A673 (cell line): ENCODE measurements at regions of chr14 and their contacts with region 1.

Region 1: DNA sequence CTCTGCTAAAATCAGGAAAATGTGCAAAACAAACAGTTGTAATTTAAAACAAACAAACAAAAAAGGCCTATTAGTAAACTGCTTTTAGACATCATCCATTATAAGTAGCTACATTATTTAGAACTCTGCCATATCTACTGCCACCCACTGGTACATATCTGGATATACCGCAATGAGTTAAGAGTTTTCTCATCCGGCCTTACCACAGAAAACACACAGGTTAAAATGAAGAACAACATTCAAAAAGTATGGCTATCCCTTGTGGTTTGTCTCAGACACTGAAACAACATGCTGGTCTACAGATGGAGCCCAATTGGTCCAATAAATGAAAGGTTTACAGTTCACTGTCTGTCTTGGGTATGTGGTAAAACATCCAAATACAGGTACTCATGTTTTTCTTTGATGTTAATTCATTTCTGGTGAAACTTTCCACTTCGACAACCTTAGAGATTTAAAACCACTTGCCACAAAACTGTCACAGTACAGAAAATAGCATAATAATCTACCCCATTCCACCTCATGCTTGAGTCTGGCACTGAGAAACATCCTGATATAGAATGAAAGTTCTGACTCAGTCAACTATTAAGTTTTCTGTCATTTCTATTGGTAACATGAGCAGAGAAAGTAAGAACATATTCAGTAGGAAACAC is 354.3 kb downstream of the CEP128 start:
- DNase-seq: peak; percentile 36
- H3K4me3 ChIP-seq: no peak overlapping the region
- H3K27ac ChIP-seq: no peak overlapping the region
- H3K4me1 ChIP-seq: no peaks in the 10 kb centered on the region
- H3K27me3 ChIP-seq: no peaks in the 10 kb centered on the region
- CTCF ChIP-seq: peak; percentile 67

Region 2: GRCh38 chr14:80213599-80213998 is 373.6 kb before region 1 on chr14:
- CTCF ChIA-PET with region 1: no interaction called
- POLR2A ChIA-PET with region 1: no interaction called
- intact Hi-C with region 1: loop called (anchors 5 kb)
- DNase-seq: peak; percentile 72
- H3K4me3 ChIP-seq: no peak overlapping the region
- H3K27ac ChIP-seq: no peak overlapping the region
- H3K4me1 ChIP-seq: no peaks in the 10 kb centered on the region
- H3K27me3 ChIP-seq: no peaks in the 10 kb centered on the region
- CTCF ChIP-seq: peak; percentile 75

Region 3: DNA sequence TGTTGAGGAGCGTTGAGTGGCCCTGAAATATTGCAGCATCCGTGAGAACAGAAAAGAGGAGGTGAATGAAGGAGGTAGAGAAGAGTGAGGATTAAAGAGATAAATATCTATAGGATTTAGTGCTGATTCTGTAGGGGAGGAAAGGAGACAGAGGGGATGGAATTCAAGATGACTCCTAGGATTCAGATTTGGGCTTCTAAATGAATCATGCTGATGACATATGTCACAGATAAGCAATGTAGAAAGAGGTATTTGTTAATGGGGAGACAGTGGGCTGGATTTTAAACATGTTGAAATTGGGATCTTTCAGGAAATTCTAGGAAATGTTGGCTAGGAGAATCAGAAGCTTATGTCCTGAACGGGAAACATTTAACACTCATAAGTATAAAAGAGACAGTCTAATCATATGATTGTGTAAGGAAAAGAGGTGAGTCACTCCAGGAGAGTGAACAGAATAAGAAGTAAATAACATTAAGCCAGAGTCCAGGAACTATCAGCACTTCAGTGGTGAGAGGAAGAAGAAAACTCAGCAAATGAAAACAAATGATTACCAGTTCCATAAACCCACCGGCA is 317.8 kb before region 1 on chr14:
- CTCF ChIA-PET with region 1: no interaction called
- POLR2A ChIA-PET with region 1: no interaction called
- intact Hi-C with region 1: no loop called
- DNase-seq: no peak
- H3K4me3 ChIP-seq: no peak overlapping the region
- H3K27ac ChIP-seq: no peak overlapping the region
- H3K4me1 ChIP-seq: no peaks in the 10 kb centered on the region
- H3K27me3 ChIP-seq: no peaks in the 10 kb centered on the region
- CTCF ChIP-seq: no peak